ENCODE measurements at regions of chr11 and their contacts with region 1.

Region 1: GRCh38 chr11:129331871-129332274 is 43.8 kb upstream of the BARX2 start:
- DNase-seq: peak; percentile 75
- H3K4me3 Mint-ChIP-seq: no peak overlapping the region
- H3K27ac Mint-ChIP-seq: no peak overlapping the region
- H3K4me1 Mint-ChIP-seq: peaks cover 5% of the 10 kb centered on the region
- H3K27me3 Mint-ChIP-seq: peaks cover 15% of the 10 kb centered on the region

Region 2: GRCh38 chr11:129061466-129062194 is 270.2 kb before region 1 on chr11:
- CTCF ChIA-PET with region 1: no interaction called
- DNase-seq: no peak
- H3K4me3 Mint-ChIP-seq: no peak overlapping the region
- H3K27ac Mint-ChIP-seq: no peak overlapping the region
- H3K4me1 Mint-ChIP-seq: no peaks in the 10 kb centered on the region
- H3K27me3 Mint-ChIP-seq: no peaks in the 10 kb centered on the region

Region 3: GRCh38 chr11:129117595-129118350 is 214.1 kb before region 1 on chr11:
- CTCF ChIA-PET with region 1: interaction called, 43 read pairs
- DNase-seq: peak; percentile 64
- H3K4me3 Mint-ChIP-seq: no peak overlapping the region
- H3K27ac Mint-ChIP-seq: no peak overlapping the region
- H3K4me1 Mint-ChIP-seq: peaks cover 2% of the 10 kb centered on the region
- H3K27me3 Mint-ChIP-seq: no peaks in the 10 kb centered on the region

Region 4: GRCh38 chr11:129230006-129230405 is 101.9 kb before region 1 on chr11:
- CTCF ChIA-PET with region 1: interaction called, 18 read pairs
- DNase-seq: no peak
- H3K4me3 Mint-ChIP-seq: no peak overlapping the region
- H3K27ac Mint-ChIP-seq: no peak overlapping the region
- H3K4me1 Mint-ChIP-seq: no peaks in the 10 kb centered on the region
- H3K27me3 Mint-ChIP-seq: no peaks in the 10 kb centered on the region

Region 5: GRCh38 chr11:129267716-129268115 is 64.2 kb before region 1 on chr11:
- CTCF ChIA-PET with region 1: no interaction called
- DNase-seq: no peak
- H3K4me3 Mint-ChIP-seq: no peak overlapping the region
- H3K27ac Mint-ChIP-seq: no peak overlapping the region
- H3K4me1 Mint-ChIP-seq: no peaks in the 10 kb centered on the region
- H3K27me3 Mint-ChIP-seq: no peaks in the 10 kb centered on the region

Region 6: GRCh38 chr11:129359748-129360147 is 27.9 kb after region 1 on chr11:
- CTCF ChIA-PET with region 1: no interaction called
- DNase-seq: no peak
- H3K4me3 Mint-ChIP-seq: no peak overlapping the region
- H3K27ac Mint-ChIP-seq: no peak overlapping the region
- H3K4me1 Mint-ChIP-seq: no peaks in the 10 kb centered on the region
- H3K27me3 Mint-ChIP-seq: no peaks in the 10 kb centered on the region

Region 7: GRCh38 chr11:129427376-129427775 is 95.5 kb after region 1 on chr11:
- CTCF ChIA-PET with region 1: no interaction called
- DNase-seq: no peak
- H3K4me3 Mint-ChIP-seq: no peak overlapping the region
- H3K27ac Mint-ChIP-seq: no peak overlapping the region
- H3K4me1 Mint-ChIP-seq: no peaks in the 10 kb centered on the region
- H3K27me3 Mint-ChIP-seq: peaks cover 7% of the 10 kb centered on the region

Measured in activated naive CD4-positive, alpha-beta T cell treated with anti-CD3 and anti-CD28 coated beads, Interleukin-2, amount 10 ng/mL, durations not matched to agents 7 days and 5 days (primary cell).